Natural killer cell (primary cell): ENCODE measurements at regions of chr4 and their contacts with region 1.

Region 1: DNA sequence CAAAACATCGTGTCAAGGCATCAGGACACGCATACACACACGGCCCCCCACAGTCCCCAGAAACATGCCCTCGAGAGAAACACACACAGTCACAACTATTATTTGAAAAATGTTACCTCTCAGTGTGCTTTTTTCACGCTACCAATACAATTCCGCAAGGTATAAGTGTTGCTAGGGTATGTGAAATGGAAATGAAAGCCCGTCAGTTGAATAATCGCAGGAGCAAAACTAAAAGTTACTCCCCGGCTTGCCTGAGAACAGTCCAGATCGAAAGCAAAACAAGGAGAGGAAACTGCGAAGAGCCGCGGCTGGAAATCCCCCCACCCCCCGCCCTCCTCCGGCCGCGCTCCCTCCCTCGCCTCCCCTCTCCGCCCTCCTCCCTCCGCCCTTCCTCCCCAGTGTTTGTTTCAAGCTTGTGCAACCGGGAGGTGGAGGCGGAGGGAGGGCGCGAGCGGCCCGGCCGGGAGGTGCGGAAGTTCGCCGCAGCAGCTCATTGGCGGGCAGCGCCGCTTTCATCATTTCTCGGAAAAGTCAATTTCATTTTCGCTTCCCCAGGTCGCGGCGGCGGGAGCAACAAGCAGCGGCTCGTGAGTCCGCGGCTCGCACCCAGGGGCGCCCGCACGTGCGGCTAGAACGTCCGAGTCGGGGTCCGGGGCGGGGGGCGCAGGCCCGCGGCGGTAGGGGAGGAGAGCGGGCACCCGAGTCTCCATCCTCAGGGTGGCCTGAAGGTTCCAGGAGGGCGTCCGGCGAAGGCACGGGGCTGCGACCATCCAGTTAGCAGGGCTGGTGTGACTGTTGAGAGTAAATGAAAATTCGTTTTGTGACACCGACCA is at the start of gene IRF2:
- DNase-seq: peak; percentile 88 to 99
- ATAC-seq: peak; percentile 79 to 94 (median 84)
- H3K4me3 ChIP-seq: peak within 1 kb of the TSS; percentile 99
- H3K4me3 Mint-ChIP-seq: peak within 1 kb of the TSS; percentile 99
- H3K27ac ChIP-seq: peak within 1 kb of the TSS; percentile 97
- H3K27ac Mint-ChIP-seq: peak within 1 kb of the TSS; percentile 95 to 99
- H3K4me1 ChIP-seq: peaks cover 35% of the 10 kb centered on the region
- H3K4me1 Mint-ChIP-seq: peaks cover 55 to 57% of the 10 kb centered on the region in 2 donors
- H3K27me3 ChIP-seq: no peaks in the 10 kb centered on the region
- H3K27me3 Mint-ChIP-seq: no peaks in the 10 kb centered on the region
- CTCF ChIP-seq: no peak
- total RNA-seq, gene IRF2: 50.6 to 68.5 (median 59.8) TPM

Region 2: DNA sequence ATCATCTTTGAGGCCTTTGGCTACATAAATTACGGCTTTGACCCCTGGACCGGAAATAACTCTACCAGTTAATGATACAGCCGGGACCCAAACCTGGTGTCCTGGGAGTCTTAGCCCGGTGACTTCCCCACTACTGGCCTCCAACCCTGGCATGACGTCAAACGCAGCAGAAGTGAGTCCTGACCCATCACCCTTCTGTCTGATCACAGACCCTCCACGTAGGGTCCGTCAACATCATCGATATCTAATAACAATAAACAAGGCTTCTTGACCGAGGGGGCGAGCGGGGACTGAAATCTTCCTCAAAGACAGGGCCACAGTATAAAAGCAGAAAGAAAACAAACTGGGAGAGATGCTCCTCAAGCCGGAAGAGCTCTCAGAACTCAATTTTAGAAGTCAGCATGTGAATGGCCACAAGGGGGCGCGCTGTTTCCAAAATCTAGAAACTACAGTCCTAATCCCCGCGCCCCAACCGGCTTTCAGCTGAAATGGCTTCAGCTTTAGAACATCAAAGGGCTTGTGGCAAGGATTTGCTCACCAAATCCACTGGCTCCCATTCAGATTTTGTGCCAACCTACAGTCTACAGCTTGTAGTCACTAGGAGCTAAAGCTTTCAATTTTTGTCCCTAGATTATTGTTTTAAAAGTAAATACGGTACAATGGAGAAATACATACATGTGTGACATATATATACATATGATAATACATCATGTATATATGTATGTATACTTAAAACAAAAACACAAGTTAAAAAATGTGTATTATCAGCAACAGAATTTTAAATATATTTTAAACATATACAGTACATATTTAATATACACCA is 210.4 kb before region 1 on chr4:
- intact Hi-C with region 1: loop called (anchors 2 kb)
- DNase-seq: peak; percentile 91 to 96
- ATAC-seq: peak; percentile 73 to 89 (median 77)
- H3K4me3 ChIP-seq: no peak overlapping the region
- H3K4me3 Mint-ChIP-seq: no peak overlapping the region
- H3K27ac ChIP-seq: no peak overlapping the region
- H3K27ac Mint-ChIP-seq: peak overlapping the region; percentile 22 to 78
- H3K4me1 ChIP-seq: peaks cover 15% of the 10 kb centered on the region
- H3K4me1 Mint-ChIP-seq: peaks cover 9 to 23% of the 10 kb centered on the region in 2 donors
- H3K27me3 ChIP-seq: no peaks in the 10 kb centered on the region
- H3K27me3 Mint-ChIP-seq: no peaks in the 10 kb centered on the region
- CTCF ChIP-seq: peak; percentile 76

Region 3: GRCh38 chr4:184306949-184307348 is 167.5 kb before region 1 on chr4:
- intact Hi-C with region 1: no loop called
- DNase-seq: no peak
- ATAC-seq: no peak
- H3K4me3 ChIP-seq: no peak overlapping the region
- H3K4me3 Mint-ChIP-seq: no peak overlapping the region
- H3K27ac ChIP-seq: no peak overlapping the region
- H3K27ac Mint-ChIP-seq: no peak overlapping the region
- H3K4me1 ChIP-seq: peaks cover 15% of the 10 kb centered on the region
- H3K4me1 Mint-ChIP-seq: peaks cover 20% of the 10 kb centered on the region in 2 donors
- H3K27me3 ChIP-seq: no peaks in the 10 kb centered on the region
- H3K27me3 Mint-ChIP-seq: no peaks in the 10 kb centered on the region
- CTCF ChIP-seq: no peak

Region 4: DNA sequence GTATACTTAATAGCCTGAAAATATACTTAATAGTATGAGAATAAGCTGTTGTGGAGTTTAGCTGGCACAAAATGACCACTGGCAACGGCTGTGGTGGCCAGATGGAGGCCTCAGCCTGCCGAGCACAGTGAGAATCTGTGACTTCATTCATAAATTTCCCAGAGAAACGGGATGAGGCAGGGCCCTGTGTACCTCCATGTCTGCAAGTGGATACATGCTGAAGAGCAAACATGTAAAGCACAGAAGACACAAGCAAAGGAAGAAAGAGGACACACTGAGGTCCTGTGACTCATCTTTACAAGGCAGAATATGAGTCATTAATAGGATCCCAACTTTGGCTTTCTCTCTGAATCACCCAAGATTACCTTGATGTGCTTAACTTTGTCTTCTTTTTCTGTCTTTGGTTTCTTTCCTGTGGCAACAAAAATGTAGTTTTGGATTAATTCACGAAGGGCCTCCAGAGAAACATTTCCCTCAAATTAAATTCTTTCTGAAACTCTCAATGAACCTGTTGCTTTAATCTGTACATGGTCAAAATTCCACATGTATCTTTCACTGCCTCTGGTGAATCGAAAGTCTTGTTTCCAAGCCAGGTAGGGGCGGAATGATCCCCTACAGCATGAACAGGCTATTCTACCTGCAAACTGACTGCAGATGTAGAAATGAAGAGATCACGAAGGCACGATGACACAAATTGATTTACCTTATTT is 56.5 kb before region 1 on chr4:
- intact Hi-C with region 1: loop called (anchors 1 kb)
- DNase-seq: peak in 1 of 2 donors; percentile 62
- ATAC-seq: peak; percentile 43 to 61 (median 60)
- H3K4me3 ChIP-seq: no peak overlapping the region
- H3K4me3 Mint-ChIP-seq: peak overlapping the region; percentile 43
- H3K27ac ChIP-seq: peak overlapping the region; percentile 80
- H3K27ac Mint-ChIP-seq: peak overlapping the region; percentile 87 to 92
- H3K4me1 ChIP-seq: peaks cover 22% of the 10 kb centered on the region
- H3K4me1 Mint-ChIP-seq: peaks cover 57 to 59% of the 10 kb centered on the region in 2 donors
- H3K27me3 ChIP-seq: no peaks in the 10 kb centered on the region
- H3K27me3 Mint-ChIP-seq: no peaks in the 10 kb centered on the region
- CTCF ChIP-seq: no peak

Region 5: DNA sequence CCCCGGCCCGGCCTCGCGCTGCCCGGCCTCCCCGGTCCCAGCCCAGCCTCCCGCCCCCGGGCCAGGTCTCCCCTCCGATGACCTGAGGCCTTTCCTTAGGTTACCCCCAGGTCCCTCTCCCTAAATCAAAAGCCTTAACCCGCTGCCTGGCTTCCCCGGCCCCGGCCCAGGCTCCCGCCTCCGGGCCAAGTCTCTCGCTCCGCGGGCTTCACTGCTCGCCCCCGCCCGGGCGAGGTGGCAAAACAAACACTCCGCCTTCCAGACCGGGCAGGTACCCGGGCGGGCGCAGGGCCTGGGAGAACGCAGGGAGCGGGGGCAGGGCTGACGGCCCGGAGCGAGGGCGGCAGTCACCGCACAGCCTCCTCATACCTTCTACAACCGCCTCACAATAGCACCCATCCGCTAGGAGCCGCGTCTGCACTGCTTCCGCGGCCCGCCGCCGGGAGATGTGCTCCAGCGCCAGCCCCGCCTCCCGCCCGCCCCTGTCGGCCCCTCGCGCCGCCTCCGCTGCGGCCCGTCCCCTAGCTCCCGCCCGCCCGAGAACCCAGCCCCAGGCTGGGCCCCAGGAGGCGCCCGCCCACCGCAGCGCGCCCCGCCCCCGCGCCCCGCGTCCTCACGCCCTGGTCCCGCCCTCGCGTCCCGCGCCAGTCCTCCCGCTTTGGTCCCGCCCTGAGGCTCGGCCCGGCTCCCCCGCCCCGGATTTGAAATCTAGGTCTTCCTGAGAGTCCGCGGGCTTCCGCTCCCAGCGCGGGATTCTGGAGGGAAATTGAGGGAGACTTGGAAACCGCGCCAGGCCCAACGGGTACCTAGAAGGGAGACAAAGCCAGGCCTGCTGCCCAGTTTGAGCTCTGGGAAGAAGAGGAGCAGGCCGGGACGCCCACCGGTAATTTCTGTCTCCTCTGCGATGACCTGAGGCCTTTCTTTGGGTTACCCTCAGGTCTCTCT is 174.8 kb after region 1 on chr4 and contains the starts of genes CASP3 and PRIMPOL:
- intact Hi-C with region 1: loop called (anchors 1 kb)
- DNase-seq: peak; percentile 94 to 96
- ATAC-seq: peak; percentile 87 to 97 (median 87)
- H3K4me3 ChIP-seq: peak within 1 kb of the TSS; percentile 89
- H3K4me3 Mint-ChIP-seq: peak within 1 kb of the TSS; percentile 97
- H3K27ac ChIP-seq: peak within 1 kb of the TSS; percentile 88
- H3K27ac Mint-ChIP-seq: peak within 1 kb of the TSS; percentile 89 to 90
- H3K4me1 ChIP-seq: peaks cover 29% of the 10 kb centered on the region
- H3K4me1 Mint-ChIP-seq: peaks cover 62 to 69% of the 10 kb centered on the region in 2 donors
- H3K27me3 ChIP-seq: no peaks in the 10 kb centered on the region
- H3K27me3 Mint-ChIP-seq: no peaks in the 10 kb centered on the region
- CTCF ChIP-seq: no peak
- total RNA-seq, gene CASP3: 20.9 to 35.1 (median 30.2) TPM
- total RNA-seq, gene PRIMPOL: 13.2 to 17.9 (median 16.9) TPM

Region 6: DNA sequence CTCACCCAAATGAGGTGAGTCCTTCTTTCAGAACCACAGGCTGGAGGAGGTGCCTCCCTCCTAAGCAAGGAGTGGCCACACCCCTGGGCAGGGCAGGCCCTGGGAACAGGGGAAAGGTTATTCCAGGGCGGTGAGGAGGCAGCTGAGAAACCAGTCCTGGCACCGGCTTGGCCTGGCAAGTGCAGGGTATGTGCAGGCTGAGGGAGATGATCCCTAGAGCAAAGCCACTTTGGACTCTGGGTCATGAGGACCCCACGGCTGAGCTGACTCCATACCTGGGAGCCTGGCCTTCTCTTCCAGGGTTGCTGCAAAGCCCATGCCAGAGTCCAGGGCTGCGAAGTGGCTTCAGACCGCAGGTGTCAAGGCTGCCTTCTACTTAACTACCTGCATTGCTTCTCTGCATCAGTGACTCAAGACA is 494.3 kb after region 1 on chr4:
- intact Hi-C with region 1: loop called (anchors 5 kb)
- DNase-seq: no peak
- ATAC-seq: peak; percentile 9 to 24 (median 11)
- H3K4me3 ChIP-seq: no peak overlapping the region
- H3K4me3 Mint-ChIP-seq: no peak overlapping the region
- H3K27ac ChIP-seq: no peak overlapping the region
- H3K27ac Mint-ChIP-seq: peak overlapping the region in 1 of 2 donors; percentile 79
- H3K4me1 ChIP-seq: no peaks in the 10 kb centered on the region
- H3K4me1 Mint-ChIP-seq: peaks cover 7% of the 10 kb centered on the region in 2 donors
- H3K27me3 ChIP-seq: no peaks in the 10 kb centered on the region
- H3K27me3 Mint-ChIP-seq: peaks cover 7 to 9% of the 10 kb centered on the region in 2 donors
- CTCF ChIP-seq: no peak